Panc1 (cell line): ENCODE measurements at regions of chr5 and their contacts with region 1.

Region 1: GRCh38 chr5:151058891-151059489 is 21.8 kb downstream of the TNIP1 start:
- DNase-seq: no peak
- ATAC-seq: no peak
- H3K4me3 ChIP-seq: no peak overlapping the region
- H3K27ac ChIP-seq: no peak overlapping the region
- H3K4me1 ChIP-seq: no peaks in the 10 kb centered on the region; the same call in 1 of the 2 replicates
- H3K27me3 ChIP-seq: no peaks in the 10 kb centered on the region
- CTCF ChIP-seq: no peak

Region 2: DNA sequence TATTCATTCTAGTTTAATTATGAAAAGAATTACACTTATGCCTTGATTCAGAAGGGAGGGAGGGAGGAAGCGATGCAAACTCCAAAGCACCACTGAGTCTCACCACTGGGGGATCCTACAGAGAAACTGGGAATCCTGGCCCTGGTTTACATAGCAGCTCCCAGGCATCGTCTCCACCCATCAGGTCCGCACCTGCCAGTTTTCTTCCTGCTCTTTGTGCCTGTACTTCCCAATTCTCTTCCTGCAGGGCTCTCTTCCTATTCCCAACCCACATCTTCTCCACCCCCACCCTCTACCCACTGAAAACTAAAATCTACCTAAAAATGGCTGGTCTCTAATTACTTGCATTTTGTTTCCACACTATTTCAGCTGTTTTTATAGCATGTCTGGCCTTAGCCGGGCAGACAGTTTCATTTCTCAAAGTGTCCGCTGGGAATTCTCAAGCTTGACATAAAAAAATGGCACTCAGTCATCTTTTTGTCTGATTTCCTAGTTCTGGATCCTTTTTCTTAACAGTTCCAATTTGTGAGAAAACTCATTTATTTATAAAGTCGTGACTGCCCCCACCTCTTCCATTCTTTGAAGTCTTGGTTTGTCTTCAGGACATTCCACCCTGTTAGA is 23.4 kb after region 1 on chr5:
- CTCF ChIA-PET with region 1: no interaction called
- POLR2A ChIA-PET with region 1: interaction called, 10 read pairs
- in situ Hi-C with region 1: no loop called
- intact Hi-C with region 1: no loop called
- DNase-seq: no peak
- ATAC-seq: no peak
- H3K4me3 ChIP-seq: no peak overlapping the region
- H3K27ac ChIP-seq: no peak overlapping the region
- H3K4me1 ChIP-seq: peaks cover 25% of the 10 kb centered on the region
- H3K27me3 ChIP-seq: no peaks in the 10 kb centered on the region
- CTCF ChIP-seq: no peak